ENCODE measurements at regions of chr9 and their contacts with region 1.

Region 1: DNA sequence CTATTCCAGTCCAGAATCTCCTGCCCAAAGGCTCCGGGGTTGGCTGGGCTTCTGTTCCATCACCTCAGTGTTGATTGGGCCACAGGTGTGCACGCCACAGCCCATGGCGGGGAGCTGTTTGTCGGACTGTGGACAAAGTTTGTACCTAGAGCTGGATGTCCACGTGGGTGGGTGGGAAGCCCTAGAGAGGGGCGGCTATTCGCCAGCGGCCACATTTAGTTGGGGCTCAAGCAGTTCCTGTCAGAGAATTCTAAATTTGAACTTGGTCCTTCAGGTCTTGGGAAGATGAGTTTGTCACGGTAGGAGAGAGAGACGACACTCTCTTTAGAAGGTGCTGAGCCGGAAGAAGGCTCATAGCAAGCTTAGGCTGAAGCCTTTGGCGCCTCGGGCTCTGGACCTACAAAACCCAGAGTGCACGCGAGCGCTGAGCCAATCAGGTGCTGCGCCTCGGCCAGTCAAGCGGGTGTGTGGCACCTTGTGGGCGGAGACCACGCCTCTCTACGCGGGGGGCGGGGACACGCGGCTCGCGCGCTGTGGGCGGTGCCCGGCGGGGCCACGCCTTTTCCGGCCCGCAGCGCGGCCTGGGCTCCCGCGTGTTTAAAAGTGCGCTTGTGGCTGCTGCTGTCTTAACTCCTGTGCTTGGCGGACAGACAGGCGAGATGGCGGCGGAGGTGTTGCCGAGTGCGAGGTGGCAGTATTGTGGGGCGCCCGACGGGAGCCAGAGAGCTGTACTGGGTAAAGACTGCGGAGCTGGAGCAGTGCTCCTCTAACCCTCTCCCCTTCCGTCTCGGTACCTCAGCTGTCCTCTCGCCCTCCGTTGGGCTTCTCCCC is at the start of gene POLR1E:
- DNase-seq: peak; percentile 91 to 98 (median 96)
- ATAC-seq: peak; percentile 97
- H3K4me3 ChIP-seq: peak within 1 kb of the TSS; percentile 89
- H3K4me3 Mint-ChIP-seq: peak within 1 kb of the TSS; percentile 94
- H3K27ac ChIP-seq: peak within 1 kb of the TSS; percentile 67 to 74
- H3K27ac Mint-ChIP-seq: peak within 1 kb of the TSS; percentile 92
- H3K4me1 ChIP-seq: peaks cover 29% of the 10 kb centered on the region
- H3K4me1 Mint-ChIP-seq: peaks cover 47% of the 10 kb centered on the region
- H3K27me3 ChIP-seq: peaks cover 0 to 3% of the 10 kb centered on the region in 2 experiments
- H3K27me3 Mint-ChIP-seq: peaks cover 8% of the 10 kb centered on the region
- CTCF ChIP-seq: no peak
- total RNA-seq, gene POLR1E: 28.9 to 29.7 TPM

Region 2: GRCh38 chr9:36765468-36766341 is 719.9 kb before region 1 on chr9:
- CTCF ChIA-PET with region 1: no interaction called
- POLR2A ChIA-PET with region 1: no interaction called
- intact Hi-C with region 1: loop called in 1 of 2 experiments (anchors 10 kb)
- DNase-seq: peak; percentile 77 to 95 (median 90)
- ATAC-seq: peak; percentile 99
- H3K4me3 ChIP-seq: peak overlapping the region; percentile 63
- H3K4me3 Mint-ChIP-seq: no peak overlapping the region
- H3K27ac ChIP-seq: peak overlapping the region in 1 of 2 donors; percentile 40
- H3K27ac Mint-ChIP-seq: no peak overlapping the region
- H3K4me1 ChIP-seq: peaks cover 17% of the 10 kb centered on the region
- H3K4me1 Mint-ChIP-seq: no peaks in the 10 kb centered on the region
- H3K27me3 ChIP-seq: peaks cover 2 to 3% of the 10 kb centered on the region in 2 experiments
- H3K27me3 Mint-ChIP-seq: peaks cover 16% of the 10 kb centered on the region
- CTCF ChIP-seq: no peak

Region 3: GRCh38 chr9:37209431-37210386 is 275.9 kb before region 1 on chr9:
- CTCF ChIA-PET with region 1: no interaction called
- POLR2A ChIA-PET with region 1: no interaction called
- intact Hi-C with region 1: no loop called
- DNase-seq: peak in 1 of 14 experiments; percentile 7
- ATAC-seq: no peak
- H3K4me3 ChIP-seq: no peak overlapping the region
- H3K4me3 Mint-ChIP-seq: no peak overlapping the region
- H3K27ac ChIP-seq: no peak overlapping the region
- H3K27ac Mint-ChIP-seq: no peak overlapping the region
- H3K4me1 ChIP-seq: no peaks in the 10 kb centered on the region
- H3K4me1 Mint-ChIP-seq: peaks cover 43% of the 10 kb centered on the region
- H3K27me3 ChIP-seq: no peaks in the 10 kb centered on the region
- H3K27me3 Mint-ChIP-seq: no peaks in the 10 kb centered on the region
- CTCF ChIP-seq: no peak

Region 4: GRCh38 chr9:37422289-37423104 is 63.1 kb before region 1 on chr9 and contains the start of gene GRHPR:
- CTCF ChIA-PET with region 1: no interaction called
- POLR2A ChIA-PET with region 1: interaction called, 4 read pairs
- intact Hi-C with region 1: loop called (anchors 2 to 5 kb)
- DNase-seq: peak; percentile 80 to 95 (median 88)
- ATAC-seq: peak; percentile 99
- H3K4me3 ChIP-seq: peak within 1 kb of the TSS; percentile 86
- H3K4me3 Mint-ChIP-seq: peak within 1 kb of the TSS; percentile 96
- H3K27ac ChIP-seq: peak within 1 kb of the TSS; percentile 73 to 80
- H3K27ac Mint-ChIP-seq: peak within 1 kb of the TSS; percentile 90
- H3K4me1 ChIP-seq: peaks cover 34% of the 10 kb centered on the region
- H3K4me1 Mint-ChIP-seq: peaks cover 28% of the 10 kb centered on the region
- H3K27me3 ChIP-seq: no peaks in the 10 kb centered on the region
- H3K27me3 Mint-ChIP-seq: no peaks in the 10 kb centered on the region
- CTCF ChIP-seq: no peak
- total RNA-seq, gene GRHPR: 29.0 to 29.6 TPM

Region 5: GRCh38 chr9:37528652-37529510 is 43.3 kb after region 1 on chr9:
- CTCF ChIA-PET with region 1: no interaction called
- POLR2A ChIA-PET with region 1: no interaction called
- intact Hi-C with region 1: no loop called
- DNase-seq: peak; percentile 49 to 91 (median 60)
- ATAC-seq: peak; percentile 66
- H3K4me3 ChIP-seq: peak overlapping the region; percentile 49
- H3K4me3 Mint-ChIP-seq: peak overlapping the region; percentile 14
- H3K27ac ChIP-seq: peak overlapping the region; percentile 1 to 77
- H3K27ac Mint-ChIP-seq: peak overlapping the region; percentile 84
- H3K4me1 ChIP-seq: peaks cover 47% of the 10 kb centered on the region
- H3K4me1 Mint-ChIP-seq: peaks cover 18% of the 10 kb centered on the region
- H3K27me3 ChIP-seq: no peaks in the 10 kb centered on the region
- H3K27me3 Mint-ChIP-seq: no peaks in the 10 kb centered on the region
- CTCF ChIP-seq: no peak

Region 6: DNA sequence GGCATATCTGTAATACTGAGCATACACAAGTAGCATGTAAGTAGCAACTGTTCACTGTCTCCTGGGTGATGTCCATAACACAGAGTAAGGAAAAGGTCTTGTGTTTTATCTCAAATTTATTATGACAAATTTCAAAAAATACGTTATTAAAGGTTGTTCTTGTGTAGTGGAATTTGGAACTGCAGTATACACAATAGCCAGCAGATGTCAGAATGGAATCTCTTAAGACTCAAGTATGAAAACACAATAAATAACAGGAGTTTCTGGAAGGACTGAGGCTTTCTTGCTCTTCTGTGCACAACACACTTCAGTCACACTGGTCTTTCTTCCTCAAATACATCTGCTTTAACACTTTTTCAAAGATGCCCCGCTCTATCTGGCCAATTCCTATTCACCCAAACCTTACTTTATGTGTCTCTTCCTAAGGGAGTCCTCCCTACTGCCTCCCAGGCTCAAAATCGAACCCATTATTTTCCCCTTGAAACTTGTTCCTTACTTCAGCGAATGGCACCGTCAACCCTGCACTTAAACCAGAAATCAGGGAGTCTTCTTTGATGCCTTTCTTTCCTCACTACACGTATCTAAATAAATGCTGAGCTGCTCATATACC is 97.0 kb after region 1 on chr9:
- CTCF ChIA-PET with region 1: no interaction called
- POLR2A ChIA-PET with region 1: no interaction called
- intact Hi-C with region 1: loop called in 1 of 2 experiments (anchors 5 kb)
- DNase-seq: peak in 3 of 14 experiments; percentile 45 to 63 (median 62)
- ATAC-seq: peak; percentile 79
- H3K4me3 ChIP-seq: no peak overlapping the region
- H3K4me3 Mint-ChIP-seq: no peak overlapping the region
- H3K27ac ChIP-seq: no peak overlapping the region
- H3K27ac Mint-ChIP-seq: no peak overlapping the region
- H3K4me1 ChIP-seq: no peaks in the 10 kb centered on the region
- H3K4me1 Mint-ChIP-seq: peaks cover 18% of the 10 kb centered on the region
- H3K27me3 ChIP-seq: no peaks in the 10 kb centered on the region
- H3K27me3 Mint-ChIP-seq: no peaks in the 10 kb centered on the region
- CTCF ChIP-seq: peak; percentile 69

Region 7: GRCh38 chr9:37753489-37754190 is 268.0 kb after region 1 on chr9 and contains the start of gene TRMT10B:
- CTCF ChIA-PET with region 1: no interaction called
- POLR2A ChIA-PET with region 1: interaction called, 3 read pairs
- intact Hi-C with region 1: loop called in 1 of 2 experiments (anchors 5 kb)
- DNase-seq: peak; percentile 50 to 85 (median 62)
- ATAC-seq: peak; percentile 93
- H3K4me3 ChIP-seq: peak within 1 kb of the TSS; percentile 97
- H3K4me3 Mint-ChIP-seq: peak within 1 kb of the TSS; percentile 93
- H3K27ac ChIP-seq: peak within 1 kb of the TSS; percentile 69 to 78
- H3K27ac Mint-ChIP-seq: peak within 1 kb of the TSS; percentile 88
- H3K4me1 ChIP-seq: peaks cover 18% of the 10 kb centered on the region
- H3K4me1 Mint-ChIP-seq: peaks cover 33% of the 10 kb centered on the region
- H3K27me3 ChIP-seq: no peaks in the 10 kb centered on the region
- H3K27me3 Mint-ChIP-seq: no peaks in the 10 kb centered on the region
- CTCF ChIP-seq: no peak
- total RNA-seq, gene TRMT10B: 6.6 to 8.3 TPM

Region 8: DNA sequence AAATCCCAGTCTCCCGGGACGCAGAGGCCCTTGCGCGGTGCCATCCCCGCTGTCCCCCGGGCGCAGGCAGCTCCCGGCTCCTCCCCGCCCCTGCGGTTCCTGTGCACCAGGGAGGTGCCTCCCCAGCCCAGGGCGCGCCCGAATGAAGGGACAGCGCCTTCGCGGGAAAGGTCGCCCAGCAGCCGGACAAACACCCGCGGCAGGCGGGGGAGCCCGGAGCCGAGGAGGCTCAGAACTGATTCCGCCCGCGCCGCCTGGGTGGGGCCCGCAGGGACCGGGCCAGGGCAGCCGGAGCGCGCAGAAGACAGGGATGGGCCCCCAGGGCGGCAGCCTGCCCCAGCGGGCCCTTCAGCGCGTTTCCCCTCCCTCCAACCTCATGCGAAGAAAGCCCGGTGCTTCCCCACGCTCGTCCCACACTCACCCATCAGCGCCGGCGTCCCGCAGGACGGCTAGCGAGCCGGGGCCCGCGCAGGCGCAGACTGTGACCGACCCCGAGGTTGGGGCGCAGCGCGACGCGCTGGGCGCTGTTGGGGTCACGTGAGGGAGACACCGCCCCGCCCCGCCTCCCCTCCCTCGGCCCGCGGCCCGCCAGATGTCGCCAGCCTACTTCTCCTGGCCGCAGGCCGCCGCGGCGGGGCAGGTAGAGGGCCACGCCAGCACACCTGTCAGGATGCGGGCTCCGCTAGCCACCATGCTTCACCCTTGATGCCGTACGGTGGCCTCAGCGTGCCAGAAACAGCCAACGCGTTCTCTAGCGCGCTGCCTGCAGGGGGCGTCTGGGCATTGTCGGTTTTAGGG is 418.2 kb after region 1 on chr9 and contains the start of gene SLC25A51:
- CTCF ChIA-PET with region 1: no interaction called
- POLR2A ChIA-PET with region 1: no interaction called
- intact Hi-C with region 1: loop called in 1 of 2 experiments (anchors 5 kb)
- DNase-seq: peak; percentile 93 to 98 (median 95)
- ATAC-seq: peak; percentile 87
- H3K4me3 ChIP-seq: peak within 1 kb of the TSS; percentile 61
- H3K4me3 Mint-ChIP-seq: peak within 1 kb of the TSS; percentile 100
- H3K27ac ChIP-seq: peak within 1 kb of the TSS; percentile 57 to 70
- H3K27ac Mint-ChIP-seq: peak within 1 kb of the TSS; percentile 97
- H3K4me1 ChIP-seq: peaks cover 23% of the 10 kb centered on the region
- H3K4me1 Mint-ChIP-seq: peaks cover 33% of the 10 kb centered on the region
- H3K27me3 ChIP-seq: no peaks in the 10 kb centered on the region
- H3K27me3 Mint-ChIP-seq: no peaks in the 10 kb centered on the region
- CTCF ChIP-seq: peak; percentile 88
- total RNA-seq, gene SLC25A51: 13.3 to 13.8 TPM

Region 9: DNA sequence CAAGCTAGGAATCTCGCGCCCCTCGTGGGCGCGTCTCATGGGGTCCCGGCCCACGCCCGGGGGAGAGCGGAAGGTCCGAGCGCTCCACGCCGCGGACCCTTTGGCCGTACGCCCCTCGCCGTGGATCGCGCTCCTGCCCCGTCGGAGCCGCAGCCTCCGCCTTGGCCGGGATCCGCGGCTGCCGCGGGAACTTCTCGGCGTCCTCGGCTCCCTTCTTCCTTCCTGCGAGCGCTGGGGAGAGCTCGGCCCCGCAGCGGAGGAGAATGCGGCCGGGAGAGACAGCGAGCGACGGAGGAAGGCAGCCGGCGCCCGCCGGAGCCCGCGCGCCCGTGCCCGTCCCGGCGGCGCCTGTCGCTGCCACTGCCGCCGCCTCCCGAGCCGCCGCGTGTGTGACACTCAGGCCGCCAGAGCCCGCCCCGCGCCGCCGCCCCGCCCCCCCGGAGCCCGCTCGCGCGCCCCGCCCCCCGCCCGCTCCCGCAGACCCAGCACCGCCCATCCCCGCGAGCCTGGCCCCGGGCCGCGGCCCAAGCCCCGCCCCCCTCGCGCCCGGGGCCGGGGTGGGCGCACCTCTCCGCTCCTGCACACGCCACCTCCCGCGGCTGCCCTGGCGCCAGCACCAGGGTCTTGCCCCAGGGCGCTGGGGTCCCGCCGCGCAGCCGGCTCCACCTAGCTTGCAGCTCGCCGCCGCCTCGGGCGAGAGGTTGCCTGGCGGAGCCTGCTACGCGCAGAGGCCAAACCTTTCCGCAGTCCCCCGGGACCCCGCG is 583.4 kb after region 1 on chr9 and contains the start of gene SHB:
- CTCF ChIA-PET with region 1: no interaction called
- POLR2A ChIA-PET with region 1: no interaction called
- intact Hi-C with region 1: loop called in 1 of 2 experiments (anchors 5 kb)
- DNase-seq: peak; percentile 60 to 94 (median 81)
- ATAC-seq: peak; percentile 77
- H3K4me3 ChIP-seq: peak within 1 kb of the TSS; percentile 67
- H3K4me3 Mint-ChIP-seq: peak within 1 kb of the TSS; percentile 87
- H3K27ac ChIP-seq: no peak within 1 kb of the TSS
- H3K27ac Mint-ChIP-seq: peak within 1 kb of the TSS; percentile 29
- H3K4me1 ChIP-seq: peaks cover 26% of the 10 kb centered on the region
- H3K4me1 Mint-ChIP-seq: peaks cover 30% of the 10 kb centered on the region
- H3K27me3 ChIP-seq: no peaks in the 10 kb centered on the region
- H3K27me3 Mint-ChIP-seq: no peaks in the 10 kb centered on the region
- CTCF ChIP-seq: peak; percentile 34
- total RNA-seq, gene SHB: 1.1 to 1.2 TPM